ENCODE measurements at regions of chr16 and their contacts with region 1.

Region 1: DNA sequence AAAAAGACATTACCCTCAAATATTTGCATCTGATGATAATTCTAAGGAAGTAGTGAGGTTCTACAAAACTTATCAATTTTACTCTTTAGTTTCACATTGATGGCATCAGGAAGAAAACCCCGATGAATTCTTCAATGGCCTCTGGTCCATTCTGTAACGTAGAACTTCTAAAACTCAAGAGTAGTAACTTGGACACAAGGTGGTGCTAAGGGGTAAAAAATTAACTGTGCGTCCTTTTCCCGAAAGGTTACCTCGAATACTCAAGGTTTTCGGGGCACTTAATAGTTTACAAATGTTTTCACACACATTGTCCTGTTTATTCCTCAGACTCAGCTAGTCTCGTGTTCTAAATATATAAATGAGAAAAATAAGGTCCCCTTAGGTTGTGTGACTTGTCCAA is 517.3 kb upstream of the ZFHX3 start:
- DNase-seq: no peak
- H3K4me3 ChIP-seq: no peak overlapping the region
- H3K27ac ChIP-seq: no peak overlapping the region
- H3K4me1 ChIP-seq: no peaks in the 10 kb centered on the region
- H3K27me3 ChIP-seq: no peaks in the 10 kb centered on the region
- CTCF ChIP-seq: peak; percentile 22 to 54 (median 38)

Region 2: GRCh38 chr16:73878611-73879010 is 313.3 kb after region 1 on chr16:
- intact Hi-C with region 1: loop called (anchors 1 kb)
- DNase-seq: no peak
- H3K4me3 ChIP-seq: no peak overlapping the region
- H3K27ac ChIP-seq: no peak overlapping the region
- H3K4me1 ChIP-seq: no peaks in the 10 kb centered on the region
- H3K27me3 ChIP-seq: no peaks in the 10 kb centered on the region
- CTCF ChIP-seq: peak; percentile 56 to 74 (median 69)

Region 3: DNA sequence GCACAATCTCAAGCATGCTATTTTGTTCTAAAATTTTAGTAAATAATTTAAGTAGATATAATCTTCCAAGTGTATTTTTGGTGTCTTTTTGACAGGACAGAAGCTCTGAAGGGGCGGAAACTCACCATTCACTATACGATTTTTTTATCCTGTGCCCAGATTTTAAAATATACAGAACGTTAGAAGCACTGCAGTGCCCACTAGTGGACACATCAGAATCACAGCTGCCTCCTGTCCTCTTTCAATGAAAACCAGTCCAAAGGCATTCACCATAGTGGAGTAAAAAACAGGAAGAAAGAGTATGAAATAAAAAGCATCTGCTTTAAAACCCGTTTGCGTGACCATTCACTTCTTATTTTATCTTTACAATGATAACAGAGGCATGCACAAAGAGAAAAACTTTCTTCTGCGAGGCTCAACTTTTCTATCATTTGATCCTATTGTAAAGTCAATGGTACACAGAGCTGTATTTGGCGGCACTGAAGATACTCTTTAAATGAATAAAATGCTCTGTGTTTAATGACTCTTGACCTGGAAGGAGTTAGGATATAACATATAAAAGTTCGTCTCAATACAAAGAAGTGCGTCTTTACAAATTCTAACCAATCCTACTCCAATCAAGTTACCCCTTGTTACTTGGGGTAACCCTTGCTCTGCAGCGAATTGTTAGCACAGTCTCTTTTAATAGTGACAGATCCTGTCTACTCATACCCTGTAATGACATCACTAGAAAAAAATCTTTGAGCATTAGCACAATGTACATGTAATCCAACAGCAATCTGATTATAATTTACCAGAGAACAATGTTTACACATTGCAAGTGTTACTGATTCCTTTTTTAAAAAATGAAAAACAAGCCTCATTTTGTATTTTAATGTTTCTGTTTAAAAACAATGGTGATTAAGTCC is 391.6 kb after region 1 on chr16:
- intact Hi-C with region 1: loop called (anchors 1 kb)
- DNase-seq: no peak
- H3K4me3 ChIP-seq: no peak overlapping the region
- H3K27ac ChIP-seq: no peak overlapping the region
- H3K4me1 ChIP-seq: no peaks in the 10 kb centered on the region
- H3K27me3 ChIP-seq: no peaks in the 10 kb centered on the region
- CTCF ChIP-seq: peak; percentile 31 to 80 (median 79)